ENCODE measurements at regions of chr3 and their contacts with region 1.

Region 1: GRCh38 chr3:7447197-7447769 is 586.4 kb downstream of the GRM7 start:
- DNase-seq: no peak
- ATAC-seq: no peak

Region 2: GRCh38 chr3:7484636-7485035 is 37.4 kb after region 1 on chr3:
- intact Hi-C with region 1: no loop called
- DNase-seq: no peak
- ATAC-seq: no peak

Region 3: GRCh38 chr3:7504886-7505775 is 57.8 kb after region 1 on chr3:
- intact Hi-C with region 1: loop called (anchors 10 kb)
- DNase-seq: no peak
- ATAC-seq: peak; percentile 28

Measured in Right ventricle myocardium inferior (tissue), 1 donor.